ENCODE measurements at regions of chr18 and their contacts with region 1.

Region 1: DNA sequence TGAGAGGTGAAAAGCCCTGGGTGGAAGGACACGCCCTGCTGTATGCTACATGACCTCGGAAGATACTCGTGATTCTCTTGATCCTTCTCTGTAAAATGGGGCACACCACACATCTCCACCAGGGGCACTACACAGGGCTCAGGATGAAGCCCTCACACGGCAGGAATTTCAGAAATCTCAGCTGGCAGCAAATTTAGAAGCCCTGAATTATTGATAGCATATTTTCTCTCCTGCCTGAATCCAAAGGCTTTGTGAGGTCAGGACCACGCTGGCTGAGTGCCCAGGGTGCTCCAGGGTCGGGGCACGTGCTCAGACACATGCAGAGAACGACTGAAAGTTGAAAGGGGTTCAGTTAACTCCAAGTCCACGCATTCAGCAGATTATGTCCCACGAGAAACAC is 42.1 kb upstream of the GALR1 start:
- DNase-seq: peak; percentile 59 to 77 (median 70)
- H3K4me3 ChIP-seq: no peak overlapping the region
- H3K27ac ChIP-seq: no peak overlapping the region
- H3K4me1 ChIP-seq: peaks cover 11 to 37% (median 32%) of the 10 kb centered on the region in 4 experiments
- H3K27me3 ChIP-seq: no peaks in the 10 kb centered on the region

Region 2: DNA sequence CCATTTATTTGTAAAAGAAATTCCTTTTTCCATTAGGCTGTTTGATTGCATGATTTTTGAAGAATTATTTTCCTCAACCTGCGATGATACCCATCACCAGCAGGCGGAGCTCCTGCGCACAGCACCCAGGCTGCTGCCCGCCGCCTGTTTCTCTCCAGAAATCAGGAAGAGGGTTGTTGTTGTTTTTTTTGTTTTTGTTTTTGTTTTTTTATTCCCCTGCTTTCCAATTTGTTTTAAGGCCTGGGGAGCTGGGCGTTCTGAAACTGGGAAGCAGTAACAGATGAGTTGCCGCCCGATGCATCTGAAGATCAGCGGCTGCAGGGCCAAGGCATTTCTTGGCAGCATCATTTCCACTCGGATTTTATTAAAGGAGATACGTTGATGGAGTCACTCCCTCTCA is 207.0 kb before region 1 on chr18:
- CTCF ChIA-PET with region 1: interaction called, 36 read pairs
- POLR2A ChIA-PET with region 1: no interaction called
- DNase-seq: peak; percentile 44 to 61 (median 46)
- H3K4me3 ChIP-seq: no peak overlapping the region
- H3K27ac ChIP-seq: no peak overlapping the region
- H3K4me1 ChIP-seq: peaks cover 3 to 26% (median 16%) of the 10 kb centered on the region in 4 experiments
- H3K27me3 ChIP-seq: no peaks in the 10 kb centered on the region

Region 3: GRCh38 chr18:77067291-77068061 is 140.1 kb before region 1 on chr18:
- CTCF ChIA-PET with region 1: interaction called, 10 read pairs
- POLR2A ChIA-PET with region 1: no interaction called
- DNase-seq: peak; percentile 70 to 93 (median 87)
- H3K4me3 ChIP-seq: peak overlapping the region in 4 of 7 experiments; percentile 22 to 54 (median 42)
- H3K27ac ChIP-seq: peak overlapping the region; percentile 87 to 95
- H3K4me1 ChIP-seq: peaks cover 57 to 91% (median 74%) of the 10 kb centered on the region in 4 experiments
- H3K27me3 ChIP-seq: no peaks in the 10 kb centered on the region

Region 4: DNA sequence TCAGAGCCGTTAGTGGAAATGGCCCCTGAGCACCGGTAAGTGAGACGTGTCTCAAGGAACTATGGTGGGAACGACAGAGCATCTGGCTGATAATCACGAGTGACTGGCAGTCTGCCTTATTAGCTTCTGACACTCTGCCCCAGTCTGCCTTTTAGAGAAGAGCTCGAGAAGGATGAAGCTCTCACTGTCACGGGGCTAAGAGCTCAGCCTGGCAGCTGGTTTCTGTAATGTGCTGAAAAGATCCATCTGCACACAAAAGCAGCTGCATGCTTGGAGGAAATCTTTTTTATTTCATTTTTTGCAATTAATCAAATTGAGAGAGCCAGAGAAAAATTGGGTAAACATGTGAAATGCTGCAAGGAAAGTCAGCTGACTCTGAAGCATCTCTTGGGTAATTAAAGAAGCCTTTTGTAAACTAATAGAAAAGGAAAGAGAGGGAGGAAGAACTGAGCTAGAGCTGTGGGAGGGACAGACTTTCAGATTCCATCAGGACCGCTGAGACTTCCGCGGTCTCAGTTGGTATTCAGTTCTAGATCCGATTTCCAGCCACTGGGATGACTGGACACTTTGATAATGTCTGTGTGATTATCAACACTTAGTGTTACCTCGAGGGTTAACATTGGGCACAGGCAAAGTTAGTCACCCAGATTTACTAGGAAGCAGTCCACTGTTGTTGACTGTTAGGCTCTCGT is 99.4 kb before region 1 on chr18:
- CTCF ChIA-PET with region 1: interaction called, 10 read pairs
- POLR2A ChIA-PET with region 1: interaction called, 3 read pairs
- DNase-seq: peak in 2 of 3 donors; percentile 79 to 85
- H3K4me3 ChIP-seq: peak overlapping the region in 3 of 7 experiments; percentile 29 to 59 (median 50)
- H3K27ac ChIP-seq: peak overlapping the region; percentile 12 to 28
- H3K4me1 ChIP-seq: peaks cover 32 to 100% (median 84%) of the 10 kb centered on the region in 4 experiments
- H3K27me3 ChIP-seq: no peaks in the 10 kb centered on the region

Region 5: DNA sequence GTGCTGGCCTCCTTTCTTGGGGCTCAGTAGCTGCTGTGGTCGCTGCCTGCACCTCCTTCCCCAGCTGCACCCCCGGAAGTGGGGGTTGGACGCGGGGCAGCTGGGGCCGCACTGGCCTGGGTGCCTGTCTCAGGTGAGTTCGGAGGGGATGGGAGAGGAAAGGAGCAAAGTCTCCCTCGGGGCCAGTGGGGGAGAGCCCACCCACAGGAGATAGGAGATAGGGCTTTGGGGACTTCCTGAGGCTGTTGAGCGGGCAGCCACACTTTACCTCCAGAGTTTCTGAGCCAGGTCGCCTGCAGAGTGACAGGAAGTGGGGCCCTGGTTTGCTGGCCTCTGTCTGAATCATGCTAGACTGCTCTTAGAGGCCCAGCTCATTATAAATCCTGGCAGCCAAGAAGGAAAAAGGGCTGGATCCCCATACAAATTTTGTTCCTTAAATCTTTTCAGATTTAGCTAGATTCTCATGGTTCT is 83.1 kb before region 1 on chr18:
- CTCF ChIA-PET with region 1: interaction called, 25 read pairs
- POLR2A ChIA-PET with region 1: no interaction called
- DNase-seq: peak in 2 of 3 donors; percentile 64 to 77
- H3K4me3 ChIP-seq: peak overlapping the region in 5 of 7 experiments; percentile 27 to 60 (median 52)
- H3K27ac ChIP-seq: peak overlapping the region in 1 of 2 experiments; percentile 78
- H3K4me1 ChIP-seq: peaks cover 49 to 97% (median 87%) of the 10 kb centered on the region in 4 experiments
- H3K27me3 ChIP-seq: no peaks in the 10 kb centered on the region

Region 6: DNA sequence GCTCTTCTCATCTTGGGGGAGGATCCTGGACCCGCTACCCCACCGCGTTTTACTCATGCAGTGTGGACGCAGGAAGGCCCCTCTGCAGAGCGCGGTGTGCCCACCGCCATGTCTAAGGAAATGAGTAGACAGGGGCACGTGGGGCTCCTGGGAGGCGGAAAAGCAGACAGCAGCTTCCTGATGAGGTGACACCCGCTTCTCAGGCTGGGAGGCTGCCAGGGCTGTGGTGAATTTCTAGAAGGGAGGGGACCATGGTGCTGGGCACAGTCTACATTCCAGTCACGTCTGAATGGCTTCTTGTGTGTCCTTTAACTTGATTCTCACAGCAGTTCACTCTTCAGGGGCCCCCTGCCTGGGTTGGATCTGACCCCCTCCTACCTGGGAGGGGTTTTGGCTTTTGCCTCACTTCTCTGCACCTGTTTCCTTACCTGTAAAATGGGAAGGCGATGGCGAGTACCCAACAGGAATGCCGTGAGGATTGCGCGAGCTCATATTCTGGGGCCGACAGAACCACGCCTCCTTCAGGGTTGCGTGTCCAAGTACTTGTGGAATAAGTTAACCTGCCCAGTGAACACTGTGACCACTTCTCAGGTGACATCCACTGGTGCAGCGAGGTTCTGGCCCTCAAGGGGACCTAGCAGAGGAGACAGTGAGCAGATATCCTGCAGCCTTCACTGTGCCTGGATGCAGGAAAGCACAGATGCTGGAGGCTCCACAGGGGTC is 42.6 kb before region 1 on chr18:
- CTCF ChIA-PET with region 1: interaction called, 10 read pairs
- POLR2A ChIA-PET with region 1: no interaction called
- DNase-seq: peak; percentile 52 to 87 (median 81)
- H3K4me3 ChIP-seq: peak overlapping the region in 2 of 7 experiments; percentile 23 to 26
- H3K27ac ChIP-seq: no peak overlapping the region
- H3K4me1 ChIP-seq: peaks cover 3 to 39% (median 25%) of the 10 kb centered on the region in 4 experiments
- H3K27me3 ChIP-seq: no peaks in the 10 kb centered on the region

Region 7: GRCh38 chr18:77262470-77263142 is 55.1 kb after region 1 on chr18:
- CTCF ChIA-PET with region 1: no interaction called
- POLR2A ChIA-PET with region 1: no interaction called
- DNase-seq: no peak
- H3K4me3 ChIP-seq: no peak overlapping the region
- H3K27ac ChIP-seq: no peak overlapping the region
- H3K4me1 ChIP-seq: no peaks in the 10 kb centered on the region
- H3K27me3 ChIP-seq: peaks cover 0 to 4% (median 0%) of the 10 kb centered on the region in 5 experiments